AG04449 (cell line): ENCODE measurements at regions of chr17 and their contacts with region 1.

Region 1: GRCh38 chr17:62109378-62109902 is 44.4 kb upstream of the MED13 start:
- DNase-seq: peak; percentile 7
- H3K4me3 ChIP-seq: no peak overlapping the region
- CTCF ChIP-seq: peak; percentile 75

Region 2: DNA sequence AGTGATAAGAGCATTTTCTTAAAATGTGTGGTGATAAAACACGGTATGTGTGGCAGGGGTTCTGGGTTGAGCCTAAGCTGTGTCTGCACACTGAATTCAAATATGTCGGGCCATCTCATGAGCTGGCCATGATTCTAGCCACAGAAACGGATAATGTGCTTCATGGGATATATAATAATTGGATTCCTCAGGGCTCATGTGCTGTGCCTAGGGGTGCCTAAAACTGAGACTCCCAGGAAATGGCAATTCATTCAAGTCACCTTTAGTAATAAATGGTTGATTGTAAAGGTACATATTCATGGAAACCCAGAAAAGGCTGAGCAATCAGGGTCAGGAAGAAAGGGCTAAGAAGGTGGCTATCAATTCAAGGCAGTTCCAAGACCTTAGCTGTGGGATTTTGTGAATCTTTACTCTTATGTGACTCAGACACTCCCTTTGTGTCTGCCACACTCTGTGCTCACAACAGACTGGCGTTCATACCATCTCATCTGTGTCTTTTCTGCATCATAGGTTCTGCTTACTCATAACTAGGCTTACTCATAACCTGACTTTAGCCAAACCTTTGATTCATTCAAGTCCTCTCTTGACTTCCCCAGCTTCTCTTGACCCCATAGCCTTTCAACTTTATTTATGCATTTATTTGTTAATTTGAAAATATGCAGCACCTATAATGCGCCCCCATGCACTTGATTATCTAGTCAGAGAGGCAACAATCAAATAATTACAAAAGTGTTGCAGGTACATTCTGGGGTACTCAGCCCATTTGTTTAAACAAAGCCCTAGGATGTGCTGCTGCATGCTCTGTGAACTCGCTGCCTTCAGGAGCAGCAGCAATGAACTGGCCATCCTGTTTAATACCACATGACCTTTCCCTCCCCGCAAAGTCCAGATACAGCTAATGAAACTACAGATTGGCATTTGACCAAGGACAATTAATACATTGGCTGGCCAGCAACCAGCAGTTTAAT is 16.0 kb before region 1 on chr17:
- CTCF ChIA-PET with region 1: interaction called, 27 read pairs
- POLR2A ChIA-PET with region 1: no interaction called
- DNase-seq: peak; percentile 61
- H3K4me3 ChIP-seq: no peak overlapping the region
- CTCF ChIP-seq: no peak

Region 3: DNA sequence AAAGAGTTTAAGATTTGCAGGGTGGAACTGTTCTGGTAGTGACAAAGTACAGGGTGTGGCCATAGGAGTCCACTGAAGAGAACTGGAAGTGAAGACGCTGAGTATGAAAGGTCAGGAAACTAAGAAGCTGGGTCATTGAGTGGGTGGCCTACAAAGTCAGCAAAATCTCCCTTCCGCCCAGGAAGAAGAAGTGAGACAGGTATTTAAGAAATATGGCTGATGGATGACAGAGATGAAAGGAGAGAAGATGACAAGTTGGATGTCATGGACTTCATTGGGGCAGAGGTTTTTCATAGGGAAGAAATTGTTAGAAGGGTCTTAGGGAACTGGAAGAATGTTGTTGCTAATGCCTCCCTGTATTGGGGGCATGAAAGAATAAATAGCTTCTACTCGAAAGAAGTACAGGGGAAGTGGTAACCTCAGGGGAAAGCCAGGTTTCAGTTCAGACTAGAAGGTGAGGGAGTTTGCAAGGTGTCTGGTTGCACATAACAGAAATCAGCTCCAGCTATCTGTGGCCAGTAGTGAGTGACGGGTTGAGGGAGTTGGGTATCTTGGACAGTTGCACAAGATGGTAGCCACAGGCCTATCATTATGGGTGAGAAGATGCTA is 10.7 kb before region 1 on chr17:
- CTCF ChIA-PET with region 1: interaction called, 27 read pairs
- POLR2A ChIA-PET with region 1: no interaction called
- DNase-seq: no peak
- H3K4me3 ChIP-seq: no peak overlapping the region
- CTCF ChIP-seq: no peak

Region 4: GRCh38 chr17:62121025-62121730 is 11.7 kb after region 1 on chr17:
- CTCF ChIA-PET with region 1: interaction called, 13 read pairs
- POLR2A ChIA-PET with region 1: no interaction called
- DNase-seq: no peak
- H3K4me3 ChIP-seq: no peak overlapping the region
- CTCF ChIP-seq: no peak